Heart left ventricle (tissue), 16 donors: ENCODE measurements at regions of chr1 and their contacts with region 1.

Region 1: GRCh38 chr1:199132006-199132405 is 493.2 kb downstream of the PTPRC start:
- DNase-seq: no peak
- ATAC-seq: no peak
- H3K4me3 ChIP-seq: no peak overlapping the region
- H3K27ac ChIP-seq: no peak overlapping the region
- H3K4me1 ChIP-seq: no peaks in the 10 kb centered on the region
- H3K27me3 ChIP-seq: no peaks in the 10 kb centered on the region
- CTCF ChIP-seq: no peak
- POLR2A ChIP-seq: no peak

Region 2: GRCh38 chr1:199226163-199226562 is 94.2 kb after region 1 on chr1:
- intact Hi-C with region 1: loop called in 1 of 10 experiments (anchors 10 kb)
- DNase-seq: no peak
- ATAC-seq: no peak
- H3K4me3 ChIP-seq: no peak overlapping the region
- H3K27ac ChIP-seq: no peak overlapping the region
- H3K4me1 ChIP-seq: peaks cover 0 to 9% (median 0%) of the 10 kb centered on the region in 12 donors
- H3K27me3 ChIP-seq: no peaks in the 10 kb centered on the region
- CTCF ChIP-seq: no peak
- POLR2A ChIP-seq: no peak